B cell (primary cell): ENCODE measurements at regions of chr2 and their contacts with region 1.

Region 1: GRCh38 chr2:9630749-9631483 is at the start of gene YWHAQ:
- DNase-seq: peak; percentile 100
- ATAC-seq: peak; percentile 91
- H3K4me3 ChIP-seq: peak within 1 kb of the TSS; percentile 54 to 89 (median 69)
- H3K4me3 Mint-ChIP-seq: peak within 1 kb of the TSS; percentile 94
- H3K27ac ChIP-seq: peak within 1 kb of the TSS; percentile 76 to 92
- H3K27ac Mint-ChIP-seq: peak within 1 kb of the TSS; percentile 94
- H3K4me1 ChIP-seq: peaks cover 23 to 36% of the 10 kb centered on the region in 2 donors
- H3K4me1 Mint-ChIP-seq: peaks cover 46% of the 10 kb centered on the region
- H3K27me3 ChIP-seq: no peaks in the 10 kb centered on the region
- H3K27me3 Mint-ChIP-seq: no peaks in the 10 kb centered on the region
- CTCF ChIP-seq: no peak
- total RNA-seq, gene YWHAQ: 119 and 126 TPM in 2 replicates

Region 2: DNA sequence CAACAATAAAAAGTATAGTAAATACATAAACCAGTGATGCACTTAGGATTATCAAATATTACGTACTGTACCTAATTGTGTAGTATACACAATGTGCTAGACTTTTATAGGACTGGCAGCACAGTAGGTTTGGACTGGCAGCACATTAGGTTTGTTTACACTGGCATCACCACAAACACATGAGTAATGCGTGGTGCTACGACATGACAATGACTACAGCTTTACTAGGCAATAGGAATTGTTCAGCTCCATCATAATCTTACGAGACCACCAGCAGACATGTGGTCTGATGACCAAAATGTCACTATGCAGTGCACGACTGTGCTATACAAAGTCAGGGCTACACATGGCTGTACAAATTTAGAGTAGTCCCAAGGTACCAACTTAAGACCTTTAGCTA is 629.7 kb before region 1 on chr2:
- CTCF ChIA-PET with region 1: no interaction called
- POLR2A ChIA-PET with region 1: no interaction called
- intact Hi-C with region 1: no loop called
- DNase-seq: no peak
- ATAC-seq: no peak
- H3K4me3 ChIP-seq: no peak overlapping the region
- H3K4me3 Mint-ChIP-seq: no peak overlapping the region
- H3K27ac ChIP-seq: no peak overlapping the region
- H3K27ac Mint-ChIP-seq: no peak overlapping the region
- H3K4me1 ChIP-seq: peaks cover 11 to 16% of the 10 kb centered on the region in 2 donors
- H3K4me1 Mint-ChIP-seq: peaks cover 11% of the 10 kb centered on the region
- H3K27me3 ChIP-seq: peaks cover 0 to 11% (median 2%) of the 10 kb centered on the region in 4 experiments
- H3K27me3 Mint-ChIP-seq: peaks cover 9% of the 10 kb centered on the region
- CTCF ChIP-seq: no peak

Region 3: DNA sequence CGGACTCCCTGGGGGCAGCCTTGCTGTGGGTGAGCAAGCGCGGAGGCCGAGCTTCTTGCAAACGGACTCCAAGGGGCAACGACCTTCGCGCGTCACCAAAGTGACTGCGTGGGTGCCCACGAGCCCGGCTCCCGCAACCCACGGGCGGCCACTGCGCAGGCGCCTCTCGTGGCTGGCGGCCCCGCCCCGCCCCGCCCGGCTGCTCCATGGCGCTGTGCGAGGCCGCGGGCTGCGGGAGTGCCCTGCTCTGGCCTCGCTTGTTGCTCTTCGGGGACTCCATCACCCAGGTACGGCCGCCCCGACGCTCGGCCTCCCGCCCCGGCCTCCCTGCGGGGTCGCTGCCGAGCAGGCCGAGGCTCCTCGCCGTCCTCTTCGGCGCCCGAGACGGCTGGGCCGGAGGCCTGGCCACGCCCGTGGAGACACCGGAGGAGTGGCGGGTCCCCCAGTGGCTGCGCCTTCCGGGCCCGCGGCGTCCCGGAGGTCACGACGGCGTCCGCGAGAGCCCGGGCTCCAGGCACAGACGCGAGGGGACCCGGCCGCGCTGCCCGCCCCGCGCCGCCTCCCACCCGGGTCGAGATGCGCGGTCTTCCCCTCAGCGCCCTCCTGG is 156.5 kb before region 1 on chr2 and contains the start of gene IAH1:
- CTCF ChIA-PET with region 1: no interaction called
- POLR2A ChIA-PET with region 1: interaction called, 5 read pairs
- intact Hi-C with region 1: loop called (anchors 2 kb)
- DNase-seq: peak; percentile 89
- ATAC-seq: peak; percentile 82
- H3K4me3 ChIP-seq: peak within 1 kb of the TSS; percentile 61 to 85 (median 68)
- H3K4me3 Mint-ChIP-seq: peak within 1 kb of the TSS; percentile 84
- H3K27ac ChIP-seq: peak within 1 kb of the TSS; percentile 62 to 66
- H3K27ac Mint-ChIP-seq: peak within 1 kb of the TSS; percentile 88
- H3K4me1 ChIP-seq: peaks cover 21 to 29% of the 10 kb centered on the region in 2 donors
- H3K4me1 Mint-ChIP-seq: peaks cover 40% of the 10 kb centered on the region
- H3K27me3 ChIP-seq: no peaks in the 10 kb centered on the region
- H3K27me3 Mint-ChIP-seq: no peaks in the 10 kb centered on the region
- CTCF ChIP-seq: no peak
- total RNA-seq, gene IAH1: 47.1 and 54.8 TPM in 2 replicates

Region 4: DNA sequence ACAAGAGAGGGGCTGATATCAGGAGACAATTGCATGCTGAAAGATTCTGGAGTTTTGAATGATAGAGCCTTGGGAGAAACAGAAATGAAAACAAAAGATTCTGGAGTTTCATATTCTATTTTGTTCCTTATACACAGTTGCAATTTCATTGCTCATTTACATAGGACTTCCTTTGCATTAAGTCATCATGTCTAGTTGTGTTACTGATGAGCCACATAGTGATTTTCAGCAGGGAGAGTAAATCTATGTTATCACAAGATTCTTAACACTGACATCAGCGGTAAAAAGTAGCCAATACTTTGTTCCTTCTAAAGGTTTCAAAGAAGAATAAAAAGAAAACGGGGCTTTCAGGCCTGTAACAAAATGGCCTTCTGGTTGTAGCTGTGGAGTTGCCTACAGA is 82.4 kb before region 1 on chr2:
- CTCF ChIA-PET with region 1: no interaction called
- POLR2A ChIA-PET with region 1: interaction called, 5 read pairs
- intact Hi-C with region 1: loop called (anchors 1 kb)
- DNase-seq: peak; percentile 77
- ATAC-seq: peak; percentile 63
- H3K4me3 ChIP-seq: peak overlapping the region; percentile 16 to 66 (median 55)
- H3K4me3 Mint-ChIP-seq: peak overlapping the region; percentile 92
- H3K27ac ChIP-seq: peak overlapping the region; percentile 80 to 86
- H3K27ac Mint-ChIP-seq: peak overlapping the region; percentile 88
- H3K4me1 ChIP-seq: peaks cover 83 to 86% of the 10 kb centered on the region in 2 donors
- H3K4me1 Mint-ChIP-seq: peaks cover 72% of the 10 kb centered on the region
- H3K27me3 ChIP-seq: no peaks in the 10 kb centered on the region
- H3K27me3 Mint-ChIP-seq: no peaks in the 10 kb centered on the region
- CTCF ChIP-seq: no peak

Region 5: GRCh38 chr2:9555297-9556141 is 75.4 kb before region 1 on chr2 and contains the start of gene ADAM17:
- CTCF ChIA-PET with region 1: interaction called, 11 read pairs
- POLR2A ChIA-PET with region 1: interaction called, 25 read pairs
- intact Hi-C with region 1: loop called (anchors 1 kb)
- DNase-seq: peak; percentile 94
- ATAC-seq: peak; percentile 91
- H3K4me3 ChIP-seq: peak within 1 kb of the TSS; percentile 74 to 99 (median 98)
- H3K4me3 Mint-ChIP-seq: peak within 1 kb of the TSS; percentile 98
- H3K27ac ChIP-seq: peak within 1 kb of the TSS; percentile 92 to 93
- H3K27ac Mint-ChIP-seq: peak within 1 kb of the TSS; percentile 99
- H3K4me1 ChIP-seq: peaks cover 41 to 44% of the 10 kb centered on the region in 2 donors
- H3K4me1 Mint-ChIP-seq: peaks cover 47% of the 10 kb centered on the region
- H3K27me3 ChIP-seq: no peaks in the 10 kb centered on the region
- H3K27me3 Mint-ChIP-seq: no peaks in the 10 kb centered on the region
- CTCF ChIP-seq: peak; percentile 33
- total RNA-seq, gene ADAM17: 57.8 and 60.5 TPM in 2 replicates

Region 6: DNA sequence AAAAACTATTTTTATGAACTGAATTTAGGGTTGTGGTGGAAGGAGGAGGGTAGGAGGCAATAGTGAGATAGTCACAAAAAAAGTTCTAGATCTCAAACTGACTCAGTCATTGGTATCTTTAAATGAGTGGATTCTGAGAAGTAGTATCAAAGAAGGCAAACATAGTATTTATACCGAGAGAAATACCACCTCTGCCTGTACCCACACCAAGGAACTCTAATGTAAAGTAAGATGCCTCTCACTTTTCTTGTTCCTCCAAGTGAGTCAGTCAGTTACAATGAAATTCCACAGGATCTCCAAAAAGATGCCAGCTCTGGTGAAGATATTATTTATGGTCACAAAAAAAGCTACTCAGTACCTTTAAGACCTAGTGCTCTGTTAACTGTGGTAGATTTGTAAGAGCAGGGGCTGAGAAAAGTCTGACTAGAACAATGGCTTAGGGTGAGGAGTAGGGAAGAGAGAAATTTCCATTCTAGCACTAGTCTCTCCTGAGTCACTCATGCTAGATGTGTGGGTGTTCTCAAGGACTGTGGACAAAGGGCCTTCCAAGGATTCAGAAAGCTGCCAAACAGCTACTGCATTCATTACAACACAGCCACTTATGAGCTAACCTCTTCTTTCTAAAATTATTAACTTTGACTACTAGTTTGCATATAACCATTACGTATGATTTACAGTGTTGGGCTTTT is 36.4 kb before region 1 on chr2:
- CTCF ChIA-PET with region 1: no interaction called
- POLR2A ChIA-PET with region 1: interaction called, 3 read pairs
- intact Hi-C with region 1: loop called (anchors 5 kb)
- DNase-seq: no peak
- ATAC-seq: no peak
- H3K4me3 ChIP-seq: no peak overlapping the region
- H3K4me3 Mint-ChIP-seq: no peak overlapping the region
- H3K27ac ChIP-seq: no peak overlapping the region
- H3K27ac Mint-ChIP-seq: no peak overlapping the region
- H3K4me1 ChIP-seq: peaks cover 15 to 17% of the 10 kb centered on the region in 2 donors
- H3K4me1 Mint-ChIP-seq: peaks cover 28% of the 10 kb centered on the region
- H3K27me3 ChIP-seq: no peaks in the 10 kb centered on the region
- H3K27me3 Mint-ChIP-seq: no peaks in the 10 kb centered on the region
- CTCF ChIP-seq: no peak

Region 7: GRCh38 chr2:9613291-9613690 is 17.6 kb before region 1 on chr2:
- CTCF ChIA-PET with region 1: interaction called, 5 read pairs
- POLR2A ChIA-PET with region 1: interaction called, 24 read pairs
- intact Hi-C with region 1: loop called (anchors 1 kb)
- DNase-seq: no peak
- ATAC-seq: no peak
- H3K4me3 ChIP-seq: no peak overlapping the region
- H3K4me3 Mint-ChIP-seq: no peak overlapping the region
- H3K27ac ChIP-seq: no peak overlapping the region
- H3K27ac Mint-ChIP-seq: no peak overlapping the region
- H3K4me1 ChIP-seq: peaks cover 14 to 20% of the 10 kb centered on the region in 2 donors
- H3K4me1 Mint-ChIP-seq: peaks cover 74% of the 10 kb centered on the region
- H3K27me3 ChIP-seq: no peaks in the 10 kb centered on the region
- H3K27me3 Mint-ChIP-seq: no peaks in the 10 kb centered on the region
- CTCF ChIP-seq: no peak

Region 8: DNA sequence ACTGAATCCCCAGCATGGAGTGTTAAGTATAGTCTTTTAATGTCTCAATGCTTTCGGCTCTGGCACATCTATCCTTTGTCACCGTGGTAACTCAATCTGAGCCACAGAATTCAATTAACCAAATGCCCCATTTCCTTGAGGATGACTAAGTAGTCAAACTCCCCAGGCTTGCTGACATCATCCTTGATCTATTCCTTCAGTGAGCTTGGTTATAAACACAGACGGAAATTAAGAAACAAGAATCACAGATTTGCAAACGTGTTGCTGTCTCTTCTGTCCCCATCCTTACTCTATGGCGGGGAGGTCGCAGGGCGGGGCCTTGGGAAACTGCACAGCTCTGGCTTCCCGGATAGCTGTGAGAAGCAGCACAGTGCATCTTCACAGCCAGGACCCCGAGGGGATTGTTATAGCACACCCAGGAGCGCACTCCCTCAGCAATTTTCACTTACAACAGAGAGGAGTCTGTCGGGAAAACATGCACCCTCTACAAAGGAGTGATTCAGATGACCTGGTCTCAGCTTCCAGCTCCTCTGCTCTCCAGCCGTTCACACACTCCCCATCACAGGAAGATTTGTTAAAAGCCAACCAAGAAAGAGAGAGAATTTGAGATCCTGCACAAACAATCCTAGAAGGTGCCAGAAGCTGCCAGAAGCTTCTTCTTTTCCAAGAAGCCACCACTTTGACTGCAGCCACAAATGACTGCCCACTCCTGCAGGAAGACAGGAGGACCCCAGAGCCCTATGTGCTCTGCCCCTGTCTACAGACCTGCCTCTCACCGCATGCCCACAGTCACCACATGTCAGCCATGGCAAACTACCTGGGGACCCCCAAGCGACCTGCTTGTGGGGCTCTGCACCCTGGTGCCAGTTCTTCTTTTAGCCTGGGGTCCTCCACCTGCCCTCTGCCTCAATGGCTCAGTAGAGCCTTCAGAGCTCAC is 44.8 kb after region 1 on chr2:
- CTCF ChIA-PET with region 1: no interaction called
- POLR2A ChIA-PET with region 1: no interaction called
- intact Hi-C with region 1: no loop called
- DNase-seq: no peak
- ATAC-seq: no peak
- H3K4me3 ChIP-seq: no peak overlapping the region
- H3K4me3 Mint-ChIP-seq: no peak overlapping the region
- H3K27ac ChIP-seq: no peak overlapping the region
- H3K27ac Mint-ChIP-seq: no peak overlapping the region
- H3K4me1 ChIP-seq: no peaks in the 10 kb centered on the region
- H3K4me1 Mint-ChIP-seq: no peaks in the 10 kb centered on the region
- H3K27me3 ChIP-seq: no peaks in the 10 kb centered on the region
- H3K27me3 Mint-ChIP-seq: peaks cover 7% of the 10 kb centered on the region
- CTCF ChIP-seq: no peak

Region 9: GRCh38 chr2:9951272-9951972 is 320.5 kb after region 1 on chr2 and contains the start of gene GRHL1:
- CTCF ChIA-PET with region 1: no interaction called
- POLR2A ChIA-PET with region 1: no interaction called
- intact Hi-C with region 1: loop called (anchors 5 kb)
- DNase-seq: peak; percentile 94
- ATAC-seq: peak; percentile 96
- H3K4me3 ChIP-seq: peak within 1 kb of the TSS in 4 of 5 experiments; percentile 51 to 69 (median 62)
- H3K4me3 Mint-ChIP-seq: peak within 1 kb of the TSS; percentile 89
- H3K27ac ChIP-seq: peak within 1 kb of the TSS in 1 of 2 donors; percentile 45
- H3K27ac Mint-ChIP-seq: peak within 1 kb of the TSS; percentile 68
- H3K4me1 ChIP-seq: peaks cover 14 to 19% of the 10 kb centered on the region in 2 donors
- H3K4me1 Mint-ChIP-seq: peaks cover 14% of the 10 kb centered on the region
- H3K27me3 ChIP-seq: peaks cover 0 to 41% (median 20%) of the 10 kb centered on the region in 4 experiments
- H3K27me3 Mint-ChIP-seq: peaks cover 44% of the 10 kb centered on the region
- CTCF ChIP-seq: no peak
- total RNA-seq, gene GRHL1: 0.70 and 0.76 TPM in 2 replicates